ENCODE measurements at regions of chr7 and their contacts with region 1.

Region 1: GRCh38 chr7:24836084-24836483 is 78.8 kb upstream of the GSDME start:
- DNase-seq: peak; percentile 22
- CTCF ChIP-seq: no peak

Region 2: GRCh38 chr7:24979863-24980533 is 143.9 kb after region 1 on chr7 and contains the start of gene OSBPL3:
- in situ Hi-C with region 1: loop called (anchors 10 kb)
- DNase-seq: peak; percentile 94
- CTCF ChIP-seq: peak; percentile 55